Pancreas (tissue), 10 donors: ENCODE measurements at regions of chr11 and their contacts with region 1.

Region 1: GRCh38 chr11:95156916-95157541 is 67.4 kb downstream of the ENDOD1 start:
- DNase-seq: no peak
- ATAC-seq: peak in 2 of 4 donors; percentile 21
- H3K4me3 ChIP-seq: no peak overlapping the region
- H3K27ac ChIP-seq: no peak overlapping the region
- H3K4me1 ChIP-seq: no peaks in the 10 kb centered on the region
- H3K27me3 ChIP-seq: no peaks in the 10 kb centered on the region
- CTCF ChIP-seq: no peak

Region 2: DNA sequence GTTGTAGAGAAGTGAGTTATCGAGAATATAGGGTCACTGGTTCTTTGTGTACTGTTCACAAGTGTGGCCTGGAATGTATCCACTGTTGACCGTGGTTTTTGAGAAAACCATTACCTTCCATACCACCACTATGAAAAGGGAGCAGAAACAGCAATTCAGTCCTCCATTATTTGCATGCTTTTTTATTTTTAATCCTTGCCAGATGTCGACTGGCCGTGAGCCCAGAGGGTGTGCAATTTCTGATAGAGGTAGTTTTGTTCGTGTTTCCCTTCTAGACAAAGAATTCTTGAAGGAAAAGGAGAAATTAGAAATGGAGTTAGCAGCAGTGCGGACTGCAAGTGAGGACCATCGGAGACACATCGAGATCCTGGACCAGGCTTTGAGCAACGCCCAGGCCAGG is 307.2 kb before region 1 on chr11:
- intact Hi-C with region 1: no loop called
- DNase-seq: no peak
- ATAC-seq: no peak
- H3K4me3 ChIP-seq: no peak overlapping the region
- H3K27ac ChIP-seq: no peak overlapping the region
- H3K4me1 ChIP-seq: peaks cover 0 to 4% (median 0%) of the 10 kb centered on the region in 3 donors
- H3K27me3 ChIP-seq: no peaks in the 10 kb centered on the region
- CTCF ChIP-seq: no peak

Region 3: DNA sequence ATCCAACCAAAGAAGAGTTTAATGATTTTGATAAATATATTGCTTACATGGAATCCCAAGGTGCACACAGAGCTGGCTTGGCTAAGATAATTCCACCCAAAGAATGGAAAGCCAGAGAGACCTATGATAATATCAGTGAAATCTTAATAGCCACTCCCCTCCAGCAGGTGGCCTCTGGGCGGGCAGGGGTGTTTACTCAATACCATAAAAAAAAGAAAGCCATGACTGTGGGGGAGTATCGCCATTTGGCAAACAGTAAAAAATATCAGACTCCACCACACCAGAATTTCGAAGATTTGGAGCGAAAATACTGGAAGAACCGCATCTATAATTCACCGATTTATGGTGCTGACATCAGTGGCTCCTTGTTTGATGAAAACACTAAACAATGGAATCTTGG is 159.6 kb before region 1 on chr11:
- intact Hi-C with region 1: no loop called
- DNase-seq: no peak
- ATAC-seq: no peak
- H3K4me3 ChIP-seq: no peak overlapping the region
- H3K27ac ChIP-seq: no peak overlapping the region
- H3K4me1 ChIP-seq: no peaks in the 10 kb centered on the region
- H3K27me3 ChIP-seq: peaks cover 0 to 3% (median 0%) of the 10 kb centered on the region in 4 donors
- CTCF ChIP-seq: no peak

Region 4: GRCh38 chr11:95764267-95764898 is 607.4 kb after region 1 on chr11:
- intact Hi-C with region 1: loop called in 2 of 3 experiments (anchors 5 kb)
- DNase-seq: no peak
- ATAC-seq: peak; percentile 66 to 89 (median 86)
- H3K4me3 ChIP-seq: no peak overlapping the region
- H3K27ac ChIP-seq: no peak overlapping the region
- H3K4me1 ChIP-seq: no peaks in the 10 kb centered on the region
- H3K27me3 ChIP-seq: no peaks in the 10 kb centered on the region
- CTCF ChIP-seq: peak; percentile 16 to 62 (median 50)